Right cardiac atrium (tissue), 5 donors: ENCODE measurements at regions of chr16 and their contacts with region 1.

Region 1: GRCh38 chr16:54193665-54194333 is 92.8 kb downstream of the IRX3 start:
- DNase-seq: peak; percentile 82 to 93 (median 92)
- ATAC-seq: peak; percentile 91 to 92
- H3K4me3 ChIP-seq: no peak overlapping the region
- H3K27ac ChIP-seq: peak overlapping the region; percentile 40
- H3K4me1 ChIP-seq: no peaks in the 10 kb centered on the region
- H3K27me3 ChIP-seq: no peaks in the 10 kb centered on the region

Region 2: GRCh38 chr16:54135951-54136625 is 57.7 kb before region 1 on chr16:
- intact Hi-C with region 1: no loop called
- DNase-seq: no peak
- ATAC-seq: no peak
- H3K4me3 ChIP-seq: no peak overlapping the region
- H3K27ac ChIP-seq: no peak overlapping the region
- H3K4me1 ChIP-seq: no peaks in the 10 kb centered on the region
- H3K27me3 ChIP-seq: no peaks in the 10 kb centered on the region

Region 3: GRCh38 chr16:54266363-54266955 is 72.7 kb after region 1 on chr16:
- intact Hi-C with region 1: loop called in 1 of 4 experiments (anchors 10 kb)
- DNase-seq: no peak
- ATAC-seq: peak; percentile 75 to 93
- H3K4me3 ChIP-seq: no peak overlapping the region
- H3K27ac ChIP-seq: no peak overlapping the region
- H3K4me1 ChIP-seq: no peaks in the 10 kb centered on the region
- H3K27me3 ChIP-seq: no peaks in the 10 kb centered on the region

Region 4: GRCh38 chr16:54385141-54385540 is 191.3 kb after region 1 on chr16:
- intact Hi-C with region 1: no loop called
- DNase-seq: no peak
- ATAC-seq: no peak
- H3K4me3 ChIP-seq: no peak overlapping the region
- H3K27ac ChIP-seq: no peak overlapping the region
- H3K4me1 ChIP-seq: no peaks in the 10 kb centered on the region
- H3K27me3 ChIP-seq: no peaks in the 10 kb centered on the region